CD4-positive, alpha-beta memory T cell (primary cell): ENCODE measurements at regions of chr7 and their contacts with region 1.

Region 1: DNA sequence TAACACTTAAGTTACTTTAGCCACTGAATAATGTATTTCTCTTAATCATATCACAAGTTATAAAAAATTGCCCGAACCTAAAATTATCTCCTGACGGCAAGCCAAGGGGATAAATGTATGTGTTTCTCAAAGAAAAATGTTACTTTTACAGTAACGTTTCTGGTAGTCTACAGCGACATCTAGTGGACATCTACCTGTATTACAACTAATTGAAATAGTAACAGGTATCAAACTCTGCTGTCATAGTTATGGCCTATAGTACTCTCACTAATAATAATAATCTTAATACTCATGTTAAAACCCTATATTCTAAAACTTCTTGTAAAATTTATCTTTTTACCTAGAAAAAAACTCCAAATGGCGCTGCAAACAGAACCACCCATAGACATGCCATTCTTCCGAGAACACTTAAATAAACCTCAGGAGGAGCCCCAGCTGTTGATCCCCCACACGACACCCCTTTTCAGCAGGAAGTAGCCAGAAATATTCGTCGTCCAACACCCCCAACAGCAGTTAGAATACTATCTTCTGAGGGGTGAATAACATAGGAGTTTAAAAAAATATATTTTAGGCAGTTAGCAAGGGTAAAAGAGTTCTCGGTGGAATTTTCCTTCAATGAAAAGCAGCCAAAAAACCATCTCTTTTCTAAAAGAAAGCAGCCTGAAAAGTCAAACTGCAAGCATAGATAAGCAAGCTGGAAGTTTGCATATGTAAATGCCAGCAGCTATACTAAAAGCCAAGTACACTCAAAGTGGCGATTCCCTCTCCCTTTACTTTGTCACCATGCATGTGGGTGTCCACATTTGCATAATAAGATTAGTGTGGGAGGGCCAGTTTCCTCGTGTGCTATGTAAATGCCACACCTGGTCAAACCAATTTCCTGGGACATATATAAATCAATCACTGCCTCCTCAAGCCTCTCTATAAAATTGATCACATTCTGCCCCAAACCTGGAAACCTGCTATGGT is 40.5 kb upstream of the ZNF107 start:
- DNase-seq: peak in 4 of 5 donors; percentile 18 to 37 (median 28)
- H3K4me3 ChIP-seq: no peak overlapping the region
- H3K4me3 Mint-ChIP-seq: no peak overlapping the region
- H3K27ac ChIP-seq: no peak overlapping the region
- H3K27ac Mint-ChIP-seq: peak overlapping the region in 1 of 7 donors; percentile 43
- H3K4me1 ChIP-seq: no peaks in the 10 kb centered on the region
- H3K4me1 Mint-ChIP-seq: no peaks in the 10 kb centered on the region
- H3K27me3 ChIP-seq: no peaks in the 10 kb centered on the region
- H3K27me3 Mint-ChIP-seq: no peaks in the 10 kb centered on the region

Region 2: DNA sequence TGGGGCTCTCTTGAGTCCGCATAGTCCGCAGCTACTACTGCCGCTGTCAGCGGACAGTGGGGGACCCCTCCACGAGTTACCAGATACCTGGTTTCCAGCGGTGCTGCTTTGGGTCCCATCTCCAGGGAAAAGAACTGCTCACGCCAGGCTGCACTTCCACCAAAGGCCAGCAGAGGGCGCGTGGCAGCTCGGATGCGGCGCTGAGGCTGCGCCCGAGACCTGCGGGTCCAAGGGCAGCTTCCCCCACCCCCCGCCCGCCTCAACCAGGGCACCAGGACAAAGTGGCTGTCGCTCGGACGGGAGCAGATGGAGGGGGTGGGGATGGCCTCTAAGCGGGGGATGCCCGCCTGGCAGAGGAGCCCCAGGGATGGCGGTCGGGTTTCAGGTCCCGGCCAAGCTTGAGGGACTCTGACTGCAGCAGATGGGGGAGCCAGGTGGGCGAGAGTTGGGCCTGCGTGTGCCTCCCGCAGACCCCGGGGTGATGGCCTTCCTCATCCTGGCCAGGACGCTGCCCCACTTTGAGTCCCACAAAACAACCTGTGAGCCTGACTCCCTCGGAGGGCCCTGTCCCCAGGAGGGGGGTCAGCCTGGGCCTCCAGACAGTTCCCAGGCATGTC is 442.2 kb before region 1 on chr7:
- CTCF ChIA-PET with region 1: interaction called, 26 read pairs
- POLR2A ChIA-PET with region 1: no interaction called
- intact Hi-C with region 1: no loop called
- DNase-seq: peak in 4 of 5 donors; percentile 26 to 38 (median 30)
- H3K4me3 ChIP-seq: no peak overlapping the region
- H3K4me3 Mint-ChIP-seq: no peak overlapping the region
- H3K27ac ChIP-seq: no peak overlapping the region
- H3K27ac Mint-ChIP-seq: no peak overlapping the region
- H3K4me1 ChIP-seq: no peaks in the 10 kb centered on the region
- H3K4me1 Mint-ChIP-seq: no peaks in the 10 kb centered on the region
- H3K27me3 ChIP-seq: no peaks in the 10 kb centered on the region
- H3K27me3 Mint-ChIP-seq: peaks cover 3 to 6% of the 10 kb centered on the region in 2 donors